Ovary (tissue), 10 donors: ENCODE measurements at regions of chr15 and their contacts with region 1.

Region 1: GRCh38 chr15:64841258-64842095 is at the start of gene PLEKHO2:
- DNase-seq: peak; percentile 96 to 98 (median 97)
- H3K4me3 ChIP-seq: peak within 1 kb of the TSS; percentile 59
- H3K27ac ChIP-seq: peak within 1 kb of the TSS; percentile 72 to 91
- H3K4me1 ChIP-seq: peaks cover 10% of the 10 kb centered on the region
- H3K27me3 ChIP-seq: no peaks in the 10 kb centered on the region
- CTCF ChIP-seq: peak in 1 of 3 donors; percentile 15
- EP300 ChIP-seq: no peak
- POLR2A ChIP-seq: peak; percentile 85
- total RNA-seq, gene PLEKHO2: 12.6 to 42.7 (median 27.9) TPM

Region 2: GRCh38 chr15:64893481-64894394 is 52.3 kb after region 1 on chr15:
- intact Hi-C with region 1: loop called in 2 of 4 experiments (anchors 5 to 10 kb)
- DNase-seq: peak; percentile 89 to 94 (median 91)
- H3K4me3 ChIP-seq: peak overlapping the region; percentile 19
- H3K27ac ChIP-seq: peak overlapping the region in 1 of 2 donors; percentile 36
- H3K4me1 ChIP-seq: peaks cover 20% of the 10 kb centered on the region
- H3K27me3 ChIP-seq: no peaks in the 10 kb centered on the region
- CTCF ChIP-seq: no peak
- EP300 ChIP-seq: no peak
- POLR2A ChIP-seq: peak; percentile 38

Region 3: DNA sequence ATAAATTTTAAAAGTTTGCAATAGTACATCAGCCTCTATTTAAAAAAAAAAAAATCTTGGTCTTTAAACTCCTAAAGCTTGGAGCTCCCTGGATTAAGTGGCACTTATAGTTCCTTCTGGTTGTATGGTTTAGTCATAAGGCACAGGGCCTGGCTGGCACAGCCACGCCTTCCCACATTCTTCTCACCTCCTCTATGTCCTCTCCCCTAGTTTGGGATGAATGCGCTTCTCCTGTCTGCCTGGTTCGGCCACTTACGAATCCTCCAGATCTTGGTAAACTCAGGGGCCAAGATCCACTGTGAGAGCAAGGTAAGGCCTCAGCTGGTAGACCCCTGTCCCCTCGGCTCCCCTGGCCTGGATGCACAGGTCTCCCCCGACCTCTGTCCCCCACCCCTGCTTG is 80.2 kb after region 1 on chr15:
- intact Hi-C with region 1: loop called in 1 of 4 experiments (anchors 5 kb)
- DNase-seq: no peak
- H3K4me3 ChIP-seq: no peak overlapping the region
- H3K27ac ChIP-seq: peak overlapping the region; percentile 43 to 64
- H3K4me1 ChIP-seq: peaks cover 13% of the 10 kb centered on the region
- H3K27me3 ChIP-seq: no peaks in the 10 kb centered on the region
- CTCF ChIP-seq: no peak
- EP300 ChIP-seq: no peak
- POLR2A ChIP-seq: no peak

Region 4: GRCh38 chr15:65032801-65033537 is 191.5 kb after region 1 on chr15:
- intact Hi-C with region 1: no loop called
- DNase-seq: peak in 2 of 5 donors; percentile 43 to 57
- H3K4me3 ChIP-seq: no peak overlapping the region
- H3K27ac ChIP-seq: no peak overlapping the region
- H3K4me1 ChIP-seq: peaks cover 5% of the 10 kb centered on the region
- H3K27me3 ChIP-seq: no peaks in the 10 kb centered on the region
- CTCF ChIP-seq: peak in 1 of 3 donors; percentile 18
- EP300 ChIP-seq: no peak
- POLR2A ChIP-seq: no peak